Spleen (tissue), 13 donors: ENCODE measurements at regions of chr11 and their contacts with region 1.

Region 1: DNA sequence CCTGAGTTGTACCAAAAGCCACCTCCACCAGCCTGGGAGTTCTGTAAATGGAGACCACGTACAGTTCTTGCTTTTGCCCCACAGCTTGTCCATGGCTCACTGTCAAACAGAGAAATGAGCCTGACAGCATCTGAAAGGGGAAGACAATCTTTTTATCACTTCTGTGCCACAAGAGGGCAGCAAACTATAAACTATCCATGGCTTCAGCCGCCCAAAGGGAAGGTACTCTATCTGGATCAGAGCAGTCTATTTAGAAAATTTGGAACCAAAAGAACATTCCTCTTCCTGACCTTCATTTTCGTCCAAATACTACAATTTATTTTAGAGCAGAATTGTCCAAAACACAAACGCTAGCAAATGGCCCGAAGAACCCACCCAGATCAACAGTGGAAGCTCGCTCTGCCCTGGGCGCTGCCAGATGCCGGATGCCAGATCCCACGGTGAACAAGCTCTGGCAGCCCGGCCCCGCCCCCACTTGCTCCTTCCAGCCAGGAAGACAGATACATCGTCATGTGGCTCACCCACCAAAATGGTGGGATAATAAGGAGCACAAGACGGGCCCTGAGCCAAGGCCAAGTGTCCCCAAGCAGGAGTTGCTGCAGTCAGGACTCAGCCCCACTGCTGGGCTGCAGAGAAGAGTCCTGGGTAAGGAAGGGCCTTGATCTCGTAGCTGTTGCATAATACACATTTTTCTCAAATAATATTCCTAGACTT is 23.9 kb upstream of the SCGB1A1 start:
- DNase-seq: peak; percentile 84
- H3K4me3 ChIP-seq: peak overlapping the region in 4 of 8 donors; percentile 6 to 48 (median 18)
- H3K27ac ChIP-seq: peak overlapping the region in 7 of 8 donors; percentile 22 to 76 (median 60)
- H3K4me1 ChIP-seq: peaks cover 0 to 40% (median 13%) of the 10 kb centered on the region in 6 donors
- H3K27me3 ChIP-seq: no peaks in the 10 kb centered on the region
- CTCF ChIP-seq: peak; percentile 53 to 83 (median 74)
- POLR2A ChIP-seq: no peak

Region 2: DNA sequence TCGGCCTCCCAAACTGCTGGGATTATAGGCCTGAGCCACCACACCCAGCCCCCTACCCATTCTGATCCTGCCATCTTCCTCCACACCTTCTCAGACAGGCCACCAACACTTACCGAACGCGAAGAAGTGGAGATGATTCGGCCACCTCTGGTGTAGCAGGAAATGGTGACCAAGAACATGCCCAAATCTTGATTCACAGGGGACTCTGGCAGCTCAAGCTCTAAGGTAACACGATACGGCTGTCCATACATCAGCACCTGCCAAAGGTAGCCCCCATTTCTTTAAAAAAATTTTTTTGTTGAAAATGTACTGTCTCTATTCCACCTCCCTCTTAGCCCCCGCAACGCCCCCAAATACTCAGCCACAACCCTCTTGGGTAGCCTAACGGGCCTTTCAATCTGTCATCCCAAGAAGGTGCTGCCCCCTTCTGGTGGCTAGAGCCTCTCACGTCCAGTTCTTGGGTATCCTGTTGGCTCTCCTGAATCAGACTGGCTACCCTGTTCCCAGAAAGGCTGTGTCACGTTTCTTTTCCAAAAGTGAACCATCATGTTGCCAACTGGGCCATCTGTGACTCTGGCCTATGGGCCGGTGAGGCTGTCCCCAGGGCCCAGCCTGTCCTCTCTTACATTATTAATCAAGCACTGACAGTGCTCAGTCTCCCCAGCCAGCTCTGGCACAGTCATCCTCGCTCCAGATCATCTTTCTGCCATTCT is 299.6 kb after region 1 on chr11:
- intact Hi-C with region 1: loop called (anchors 10 kb)
- DNase-seq: peak; percentile 90
- H3K4me3 ChIP-seq: no peak overlapping the region
- H3K27ac ChIP-seq: no peak overlapping the region
- H3K4me1 ChIP-seq: peaks cover 0 to 9% (median 6%) of the 10 kb centered on the region in 6 donors
- H3K27me3 ChIP-seq: no peaks in the 10 kb centered on the region
- CTCF ChIP-seq: peak; percentile 51 to 92 (median 81)
- POLR2A ChIP-seq: no peak

Region 3: GRCh38 chr11:62860835-62861563 is 466.0 kb after region 1 on chr11:
- intact Hi-C with region 1: loop called (anchors 10 kb)
- DNase-seq: peak; percentile 27
- H3K4me3 ChIP-seq: no peak overlapping the region
- H3K27ac ChIP-seq: no peak overlapping the region
- H3K4me1 ChIP-seq: peaks cover 11 to 37% (median 22%) of the 10 kb centered on the region in 6 donors
- H3K27me3 ChIP-seq: no peaks in the 10 kb centered on the region
- CTCF ChIP-seq: no peak
- POLR2A ChIP-seq: no peak